Adrenal gland (tissue), 19 donors: ENCODE measurements at regions of chr19 and their contacts with region 1.

Region 1: DNA sequence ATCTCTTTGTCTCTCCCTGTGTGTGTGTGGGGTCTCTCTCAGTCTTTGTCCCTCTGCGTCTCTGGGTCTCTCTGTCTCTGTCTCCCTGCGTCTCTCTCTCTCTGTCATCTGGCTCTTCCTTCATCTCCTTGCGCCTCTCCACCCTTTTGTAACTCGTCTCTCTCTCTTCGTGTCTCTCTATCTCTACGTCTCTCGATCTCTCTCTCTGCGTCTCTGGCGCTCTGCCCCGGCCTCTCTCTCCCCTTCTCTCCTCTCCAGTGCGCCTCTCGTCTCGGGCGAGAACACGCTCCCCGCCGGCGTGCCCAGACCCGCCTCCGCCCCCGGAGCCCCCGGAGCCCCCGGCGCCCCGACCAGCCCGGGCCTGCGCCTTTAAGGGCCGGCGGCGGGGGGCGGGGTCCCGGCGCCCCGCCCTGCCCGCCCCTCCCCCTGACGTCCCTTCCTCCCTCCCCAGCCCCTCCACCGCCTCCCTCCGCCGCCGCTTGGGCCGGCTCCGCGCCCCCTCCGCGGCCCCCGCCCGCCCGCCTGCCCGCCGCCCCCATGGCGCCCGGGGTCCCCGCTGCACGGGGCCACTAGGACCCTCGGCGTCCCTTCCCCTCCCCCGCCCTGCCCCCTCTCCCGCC is at the start of gene MARK4:
- DNase-seq: peak in 6 of 7 donors; percentile 31 to 62 (median 50)
- H3K4me3 ChIP-seq: peak within 1 kb of the TSS; percentile 28 to 99 (median 66)
- H3K27ac ChIP-seq: peak within 1 kb of the TSS in 3 of 5 donors; percentile 57 to 89 (median 65)
- H3K4me1 ChIP-seq: peaks cover 11 to 25% of the 10 kb centered on the region in 2 donors
- H3K27me3 ChIP-seq: no peaks in the 10 kb centered on the region
- CTCF ChIP-seq: no peak
- POLR2A ChIP-seq: no peak
- total RNA-seq, gene MARK4: 5.6 to 41.9 (median 26.3) TPM

Region 2: GRCh38 chr19:45079063-45079910 is 171.7 kb before region 1 on chr19 and contains the start of gene GEMIN7:
- intact Hi-C with region 1: no loop called
- DNase-seq: peak; percentile 65 to 78 (median 76)
- H3K4me3 ChIP-seq: peak within 1 kb of the TSS; percentile 54 to 98 (median 86)
- H3K27ac ChIP-seq: peak within 1 kb of the TSS in 3 of 5 donors; percentile 57 to 64 (median 59)
- H3K4me1 ChIP-seq: peaks cover 20 to 30% of the 10 kb centered on the region in 2 donors
- H3K27me3 ChIP-seq: no peaks in the 10 kb centered on the region
- CTCF ChIP-seq: no peak
- POLR2A ChIP-seq: peak; percentile 30 to 34
- total RNA-seq, gene GEMIN7: 4.0 to 24.9 (median 14.6) TPM

Region 3: GRCh38 chr19:45331423-45331822 is 80.5 kb after region 1 on chr19:
- intact Hi-C with region 1: loop called in 1 of 2 experiments (anchors 10 kb)
- DNase-seq: no peak
- H3K4me3 ChIP-seq: no peak overlapping the region
- H3K27ac ChIP-seq: no peak overlapping the region
- H3K4me1 ChIP-seq: no peaks in the 10 kb centered on the region
- H3K27me3 ChIP-seq: no peaks in the 10 kb centered on the region
- CTCF ChIP-seq: no peak
- POLR2A ChIP-seq: no peak